Activated naive CD8-positive, alpha-beta T cell treated with anti-CD3 and anti-CD28 coated beads, Interleukin-2, amount 10 ng/mL, durations not matched to agents 7 days and 5 days (primary cell): ENCODE measurements at regions of chr12 and their contacts with region 1.

Region 1: DNA sequence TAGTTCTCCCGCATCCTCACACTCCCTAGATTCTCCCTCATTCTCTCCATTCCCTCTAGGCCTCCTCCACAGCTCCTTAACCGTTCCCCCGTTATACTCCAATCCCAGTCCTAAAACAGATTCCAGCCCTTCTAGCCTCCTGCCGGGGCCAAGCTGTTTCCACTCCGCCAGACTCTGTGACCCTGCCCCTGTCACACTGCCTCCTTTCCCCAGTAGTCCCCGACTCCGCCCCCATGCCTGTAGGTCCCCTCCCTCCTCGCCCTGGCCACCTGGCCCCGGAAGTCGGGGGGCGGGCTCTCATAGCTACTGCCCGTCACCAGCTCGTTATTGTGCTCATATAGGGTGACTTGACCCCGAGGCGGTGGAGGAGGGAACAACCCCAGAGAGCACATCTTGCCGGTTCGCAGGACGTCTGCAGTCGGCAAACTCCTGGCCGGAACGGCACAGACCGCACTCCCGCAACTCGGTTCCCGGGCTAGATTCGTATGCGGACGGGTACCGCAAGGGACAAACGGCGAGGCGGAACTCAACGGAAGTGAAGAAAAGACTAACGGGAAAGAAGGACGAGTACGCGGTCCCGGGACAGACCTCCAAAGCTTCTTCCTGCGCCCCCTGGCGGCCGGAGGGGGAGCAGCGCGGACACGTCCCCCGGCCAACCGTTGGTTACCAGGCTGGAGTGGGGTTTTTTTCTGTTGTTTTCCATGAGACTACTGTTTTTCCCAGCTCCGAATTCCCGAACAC is at the start of gene AAAS:
- DNase-seq: peak; percentile 95
- ATAC-seq: peak; percentile 82
- H3K4me3 Mint-ChIP-seq: peak within 1 kb of the TSS; percentile 100
- H3K27ac Mint-ChIP-seq: peak within 1 kb of the TSS; percentile 99
- H3K4me1 Mint-ChIP-seq: peaks cover 22% of the 10 kb centered on the region
- H3K27me3 Mint-ChIP-seq: peaks cover 3% of the 10 kb centered on the region
- total RNA-seq, gene AAAS: 65.0 to 67.0 TPM

Region 2: GRCh38 chr12:53258541-53259539 is 62.4 kb before region 1 on chr12:
- POLR2A ChIA-PET with region 1: no interaction called
- DNase-seq: no peak
- ATAC-seq: no peak
- H3K4me3 Mint-ChIP-seq: no peak overlapping the region
- H3K27ac Mint-ChIP-seq: no peak overlapping the region
- H3K4me1 Mint-ChIP-seq: peaks cover 29% of the 10 kb centered on the region
- H3K27me3 Mint-ChIP-seq: no peaks in the 10 kb centered on the region

Region 3: GRCh38 chr12:53295070-53295890 is 26.0 kb before region 1 on chr12 and contains the start of gene PFDN5:
- POLR2A ChIA-PET with region 1: interaction called, 31 read pairs
- DNase-seq: peak; percentile 82
- ATAC-seq: peak; percentile 89
- H3K4me3 Mint-ChIP-seq: peak within 1 kb of the TSS; percentile 98
- H3K27ac Mint-ChIP-seq: peak within 1 kb of the TSS; percentile 92
- H3K4me1 Mint-ChIP-seq: peaks cover 36% of the 10 kb centered on the region
- H3K27me3 Mint-ChIP-seq: no peaks in the 10 kb centered on the region
- total RNA-seq, gene PFDN5: 388 to 425 TPM

Region 4: GRCh38 chr12:53344824-53345485 is 23.7 kb after region 1 on chr12:
- POLR2A ChIA-PET with region 1: interaction called, 63 read pairs
- DNase-seq: peak; percentile 69
- ATAC-seq: peak; percentile 74
- H3K4me3 Mint-ChIP-seq: peak overlapping the region; percentile 99
- H3K27ac Mint-ChIP-seq: peak overlapping the region; percentile 92
- H3K4me1 Mint-ChIP-seq: peaks cover 15% of the 10 kb centered on the region
- H3K27me3 Mint-ChIP-seq: peaks cover 10% of the 10 kb centered on the region

Region 5: GRCh38 chr12:53355121-53355520 is 33.9 kb after region 1 on chr12:
- POLR2A ChIA-PET with region 1: no interaction called
- DNase-seq: no peak
- ATAC-seq: no peak
- H3K4me3 Mint-ChIP-seq: no peak overlapping the region
- H3K27ac Mint-ChIP-seq: no peak overlapping the region
- H3K4me1 Mint-ChIP-seq: peaks cover 11% of the 10 kb centered on the region
- H3K27me3 Mint-ChIP-seq: no peaks in the 10 kb centered on the region

Region 6: DNA sequence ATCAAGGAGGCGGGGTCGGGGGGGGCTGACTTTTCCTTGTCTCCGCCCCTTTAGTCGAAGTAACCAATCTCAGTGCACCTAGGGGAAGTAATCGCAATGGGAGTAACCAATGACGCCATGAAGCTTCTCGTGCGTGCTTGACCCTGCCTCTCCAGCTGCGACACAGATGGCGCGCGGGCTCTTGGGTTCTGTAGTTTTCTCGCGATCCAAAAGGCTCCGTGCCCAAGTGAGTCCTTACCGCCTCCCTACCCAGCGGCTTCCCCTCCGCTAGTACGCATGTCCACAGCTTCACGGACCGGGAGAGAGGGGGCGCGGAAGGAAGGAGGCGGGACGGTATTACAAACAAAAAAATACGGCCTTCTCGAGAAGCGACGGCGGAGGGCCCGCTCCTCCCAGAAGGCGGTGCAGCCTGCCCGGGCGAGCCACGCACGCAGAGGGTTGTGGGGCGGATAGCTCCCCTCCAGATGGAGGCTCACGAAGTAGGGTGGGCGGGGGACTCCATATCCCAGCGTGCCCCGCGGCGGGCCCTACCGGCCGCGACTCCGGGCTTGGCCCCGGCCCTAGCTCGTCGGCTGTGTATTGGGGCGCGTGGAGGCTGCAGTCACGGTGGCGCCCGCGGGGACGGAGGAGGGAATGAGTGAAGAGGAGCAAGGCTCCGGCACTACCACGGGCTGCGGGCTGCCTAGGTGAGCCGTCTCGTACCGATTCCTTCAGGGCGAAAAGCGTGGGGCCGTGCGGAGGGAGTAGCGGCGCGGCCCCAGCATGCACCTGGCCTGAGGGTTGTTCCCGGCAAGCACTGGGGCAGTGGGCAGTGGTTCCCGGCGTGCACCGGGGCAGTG is 179.8 kb after region 1 on chr12 and contains the start of gene TARBP2:
- POLR2A ChIA-PET with region 1: interaction called, 19 read pairs
- DNase-seq: peak; percentile 93
- ATAC-seq: peak; percentile 82
- H3K4me3 Mint-ChIP-seq: peak within 1 kb of the TSS; percentile 84
- H3K27ac Mint-ChIP-seq: peak within 1 kb of the TSS; percentile 90
- H3K4me1 Mint-ChIP-seq: peaks cover 21% of the 10 kb centered on the region
- H3K27me3 Mint-ChIP-seq: no peaks in the 10 kb centered on the region
- total RNA-seq, gene TARBP2: 32.3 to 34.9 TPM